GM10248 (cell line): ENCODE measurements at regions of chr12 and their contacts with region 1.

Region 1: DNA sequence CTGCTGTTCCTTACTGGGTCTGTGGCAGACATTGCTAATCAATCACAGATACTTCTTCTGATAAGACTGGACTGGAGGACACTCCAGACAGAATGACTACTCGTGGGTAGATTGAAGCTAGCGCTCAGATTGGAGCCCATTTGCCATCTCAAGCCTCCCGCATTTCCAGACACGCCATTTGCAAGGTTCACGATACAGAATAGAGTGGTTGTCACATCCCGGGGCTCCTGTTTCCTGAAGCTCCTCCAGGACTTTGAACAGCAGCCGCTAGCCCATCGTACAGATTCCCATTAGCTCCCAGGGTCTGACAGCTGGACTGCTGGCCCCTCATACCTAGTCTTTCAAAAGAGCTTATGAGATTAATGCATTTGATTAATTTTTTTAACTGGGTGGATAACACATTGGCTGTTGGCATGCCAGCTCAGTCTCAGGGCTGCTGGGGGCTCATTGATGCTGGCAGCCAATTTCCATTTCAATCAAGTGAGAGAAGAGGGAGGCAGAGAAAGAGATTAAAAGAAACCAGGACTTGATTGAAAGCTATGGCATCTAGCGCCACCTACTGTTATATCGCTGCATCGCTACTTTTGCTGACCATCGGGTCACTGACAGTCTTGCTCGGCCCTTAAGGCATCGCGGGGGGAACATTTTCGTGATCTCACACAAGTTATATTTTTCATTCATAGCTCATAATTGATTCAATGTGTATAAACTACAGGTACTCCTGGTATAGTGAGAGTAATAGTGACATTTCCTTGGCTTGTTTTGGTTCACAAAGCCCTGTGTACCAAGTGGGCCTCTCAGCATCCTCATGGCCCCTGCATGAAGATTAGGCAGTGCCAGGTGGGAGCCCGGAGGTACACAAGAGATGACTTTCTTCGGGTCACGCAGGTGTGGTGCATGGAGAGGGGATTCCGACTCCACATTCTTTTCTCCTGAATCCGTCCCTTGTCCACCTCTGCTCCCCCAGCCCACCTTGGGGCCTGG is 78.6 kb downstream of the CCDC60 start:
- DNase-seq: peak; percentile 58
- CTCF ChIP-seq: peak; percentile 75

Region 2: DNA sequence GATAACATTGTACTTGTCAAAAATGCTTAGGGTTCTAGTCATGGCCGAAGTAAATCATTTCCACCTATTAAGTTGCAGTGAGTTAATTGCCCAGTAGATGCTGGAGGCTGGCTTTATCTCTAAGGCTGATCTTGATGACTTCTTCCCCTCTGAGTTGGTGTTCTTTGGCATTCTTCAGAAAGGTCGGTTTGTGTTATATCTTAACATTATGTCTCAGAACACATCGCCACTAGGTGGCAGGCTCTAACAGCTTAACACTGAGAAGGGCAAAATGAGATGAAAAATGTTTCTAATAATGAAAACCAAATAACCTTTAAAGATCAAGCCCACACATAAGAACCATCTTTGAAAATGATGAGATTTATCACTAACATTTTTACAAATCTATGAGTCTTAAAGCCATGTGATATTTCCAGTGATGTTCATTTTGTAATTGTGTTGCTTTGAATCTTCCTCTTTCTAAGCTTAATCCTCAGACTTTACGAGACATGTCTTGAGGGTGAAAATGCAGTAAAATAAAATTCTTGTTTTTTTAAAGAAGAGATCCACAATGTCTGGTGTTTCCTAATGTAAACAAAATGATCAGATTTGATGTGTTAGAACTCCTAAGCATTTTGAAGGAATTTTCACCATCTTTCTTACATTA is 1008.1 kb before region 1 on chr12:
- CTCF ChIA-PET with region 1: interaction called, 28 read pairs
- POLR2A ChIA-PET with region 1: no interaction called
- DNase-seq: peak; percentile 43
- CTCF ChIP-seq: peak; percentile 83

Region 3: DNA sequence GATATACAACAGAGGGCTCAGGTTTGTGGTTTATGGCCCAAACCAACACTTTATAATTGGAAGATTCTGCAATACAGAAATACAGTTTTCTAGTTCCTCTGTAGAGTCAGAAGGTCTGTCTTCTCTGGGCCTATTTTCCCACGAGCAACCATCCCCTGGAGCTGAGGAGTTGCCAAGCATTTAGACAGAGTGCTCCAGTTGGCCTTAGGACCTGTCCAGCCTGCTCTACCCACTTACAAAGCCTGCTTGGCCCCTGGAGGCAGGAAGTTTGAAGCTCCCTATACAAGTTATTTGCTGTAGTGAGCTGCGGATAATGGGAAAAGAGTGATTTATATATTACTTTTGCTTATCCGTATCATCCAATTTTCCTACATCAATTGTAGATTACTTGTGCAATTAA is 295.2 kb before region 1 on chr12:
- CTCF ChIA-PET with region 1: interaction called, 10 read pairs
- POLR2A ChIA-PET with region 1: no interaction called
- DNase-seq: no peak
- CTCF ChIP-seq: no peak

Region 4: GRCh38 chr12:119399301-119399700 is 13.8 kb before region 1 on chr12:
- CTCF ChIA-PET with region 1: interaction called, 17 read pairs
- POLR2A ChIA-PET with region 1: no interaction called
- DNase-seq: no peak
- CTCF ChIP-seq: no peak